ENCODE measurements at regions of chr6 and their contacts with region 1.

Region 1: GRCh38 chr6:53651764-53652401 is 13.7 kb downstream of the KLHL31 start:
- DNase-seq: peak; percentile 62 to 82 (median 74)
- ATAC-seq: peak; percentile 94
- H3K4me3 ChIP-seq: peak overlapping the region; percentile 91
- H3K4me3 Mint-ChIP-seq: peak overlapping the region; percentile 90 to 99 (median 94)
- H3K27ac ChIP-seq: peak overlapping the region; percentile 45
- H3K27ac Mint-ChIP-seq: peak overlapping the region; percentile 65 to 93 (median 84)
- H3K4me1 ChIP-seq: peaks cover 9 to 15% of the 10 kb centered on the region in 2 donors
- H3K4me1 Mint-ChIP-seq: peaks cover 14 to 34% (median 21%) of the 10 kb centered on the region in 7 donors
- H3K27me3 ChIP-seq: no peaks in the 10 kb centered on the region
- H3K27me3 Mint-ChIP-seq: peaks cover 0 to 35% (median 0%) of the 10 kb centered on the region in 5 donors

Region 2: GRCh38 chr6:52670502-52671409 is 981.1 kb before region 1 on chr6 and contains the start of gene TMEM14A:
- CTCF ChIA-PET with region 1: no interaction called
- POLR2A ChIA-PET with region 1: no interaction called
- intact Hi-C with region 1: loop called in 1 of 2 experiments (anchors 5 kb)
- DNase-seq: peak; percentile 81 to 94 (median 88)
- ATAC-seq: peak; percentile 96
- H3K4me3 ChIP-seq: peak within 1 kb of the TSS; percentile 74
- H3K4me3 Mint-ChIP-seq: peak within 1 kb of the TSS; percentile 86 to 97 (median 92)
- H3K27ac ChIP-seq: peak within 1 kb of the TSS; percentile 67
- H3K27ac Mint-ChIP-seq: peak within 1 kb of the TSS; percentile 52 to 94 (median 84)
- H3K4me1 ChIP-seq: peaks cover 12 to 15% of the 10 kb centered on the region in 2 donors
- H3K4me1 Mint-ChIP-seq: peaks cover 25 to 38% (median 35%) of the 10 kb centered on the region in 7 donors
- H3K27me3 ChIP-seq: no peaks in the 10 kb centered on the region
- H3K27me3 Mint-ChIP-seq: peaks cover 0 to 3% (median 0%) of the 10 kb centered on the region in 5 donors
- total RNA-seq, gene TMEM14A: 5.3 to 18.2 (median 8.0) TPM

Region 3: GRCh38 chr6:53171605-53172446 is 480.1 kb before region 1 on chr6:
- CTCF ChIA-PET with region 1: no interaction called
- POLR2A ChIA-PET with region 1: no interaction called
- intact Hi-C with region 1: loop called (anchors 2 to 5 kb)
- DNase-seq: peak; percentile 76 to 95 (median 87)
- ATAC-seq: peak; percentile 100
- H3K4me3 ChIP-seq: no peak overlapping the region
- H3K4me3 Mint-ChIP-seq: no peak overlapping the region
- H3K27ac ChIP-seq: no peak overlapping the region
- H3K27ac Mint-ChIP-seq: no peak overlapping the region
- H3K4me1 ChIP-seq: no peaks in the 10 kb centered on the region
- H3K4me1 Mint-ChIP-seq: peaks cover 0 to 6% (median 0%) of the 10 kb centered on the region in 7 donors
- H3K27me3 ChIP-seq: no peaks in the 10 kb centered on the region
- H3K27me3 Mint-ChIP-seq: peaks cover 0 to 3% (median 0%) of the 10 kb centered on the region in 5 donors

Region 4: GRCh38 chr6:53300656-53301551 is 351.0 kb before region 1 on chr6:
- CTCF ChIA-PET with region 1: no interaction called
- POLR2A ChIA-PET with region 1: no interaction called
- intact Hi-C with region 1: loop called in 1 of 2 experiments (anchors 5 kb)
- DNase-seq: no peak
- ATAC-seq: peak; percentile 48
- H3K4me3 ChIP-seq: no peak overlapping the region
- H3K4me3 Mint-ChIP-seq: peak overlapping the region; percentile 5 to 74 (median 50)
- H3K27ac ChIP-seq: no peak overlapping the region
- H3K27ac Mint-ChIP-seq: peak overlapping the region; percentile 33 to 92 (median 68)
- H3K4me1 ChIP-seq: peaks cover 35 to 52% of the 10 kb centered on the region in 2 donors
- H3K4me1 Mint-ChIP-seq: peaks cover 53 to 84% (median 78%) of the 10 kb centered on the region in 7 donors
- H3K27me3 ChIP-seq: no peaks in the 10 kb centered on the region
- H3K27me3 Mint-ChIP-seq: no peaks in the 10 kb centered on the region

Region 5: DNA sequence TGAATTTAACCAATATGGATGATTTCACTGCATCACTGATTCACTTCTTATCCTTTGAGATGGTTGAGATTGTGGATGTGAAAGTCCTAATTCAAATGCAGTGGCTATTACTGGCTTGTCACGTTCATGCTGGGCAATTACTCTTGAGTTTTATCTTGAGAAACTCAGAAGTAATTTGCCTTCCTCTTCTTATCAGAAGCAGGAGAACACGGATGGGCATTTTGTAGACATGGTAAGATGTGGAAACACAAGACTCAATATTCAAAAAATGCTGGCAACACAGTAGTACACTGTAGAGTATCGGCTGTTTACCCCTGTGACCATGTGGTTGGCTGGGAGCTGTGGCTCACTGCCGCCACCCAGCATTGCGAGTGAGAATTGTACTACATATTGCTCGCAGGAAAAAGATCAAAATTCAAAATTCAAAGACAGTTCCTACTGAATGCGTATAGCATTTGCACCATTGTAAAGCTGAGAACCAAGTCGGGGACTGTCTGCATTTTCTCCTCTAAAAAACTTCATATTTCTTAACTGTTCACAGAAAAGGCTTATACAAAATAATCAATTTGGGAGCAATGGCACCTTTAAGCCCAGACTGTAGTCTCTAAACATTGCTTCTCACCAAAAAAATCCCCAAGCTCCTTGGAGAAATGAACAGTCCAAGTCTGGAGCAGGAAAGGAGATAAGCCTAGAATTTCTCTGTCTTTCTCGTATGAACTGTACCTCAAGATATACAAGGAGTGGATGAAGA is 241.2 kb before region 1 on chr6:
- CTCF ChIA-PET with region 1: no interaction called
- POLR2A ChIA-PET with region 1: no interaction called
- intact Hi-C with region 1: loop called in 1 of 2 experiments (anchors 2 kb)
- DNase-seq: peak; percentile 21 to 72 (median 63)
- ATAC-seq: peak; percentile 98
- H3K4me3 ChIP-seq: no peak overlapping the region
- H3K4me3 Mint-ChIP-seq: no peak overlapping the region
- H3K27ac ChIP-seq: no peak overlapping the region
- H3K27ac Mint-ChIP-seq: peak overlapping the region in 1 of 9 donors; percentile 22
- H3K4me1 ChIP-seq: peaks cover 0 to 3% of the 10 kb centered on the region in 2 donors
- H3K4me1 Mint-ChIP-seq: peaks cover 0 to 6% (median 3%) of the 10 kb centered on the region in 7 donors
- H3K27me3 ChIP-seq: no peaks in the 10 kb centered on the region
- H3K27me3 Mint-ChIP-seq: peaks cover 0 to 5% (median 0%) of the 10 kb centered on the region in 5 donors

Region 6: DNA sequence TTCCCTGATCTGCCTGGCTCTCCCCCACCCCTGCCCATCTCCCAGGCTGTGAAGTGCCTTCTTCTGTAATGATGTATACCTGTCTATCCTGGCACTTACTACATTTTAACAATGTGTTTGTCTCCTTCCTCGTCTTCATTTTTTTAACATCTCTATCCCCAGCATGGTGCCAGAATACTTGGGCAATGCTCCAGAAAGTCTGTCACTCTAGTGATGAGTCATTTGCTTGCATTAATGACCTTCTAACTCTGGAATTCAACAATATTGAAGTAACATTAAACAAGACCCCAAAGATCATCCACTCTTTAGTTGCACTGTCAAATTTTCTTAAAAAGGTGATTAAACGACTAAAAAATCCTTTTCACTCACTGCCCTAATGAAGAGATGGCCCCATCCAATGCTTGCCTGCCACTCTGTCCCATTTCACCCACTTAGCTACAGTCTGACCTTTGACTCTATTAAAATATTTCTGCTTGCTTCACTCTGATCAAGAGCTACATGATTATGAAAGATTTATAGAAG is 21.3 kb after region 1 on chr6:
- CTCF ChIA-PET with region 1: no interaction called
- POLR2A ChIA-PET with region 1: no interaction called
- intact Hi-C with region 1: no loop called
- DNase-seq: no peak
- ATAC-seq: no peak
- H3K4me3 ChIP-seq: no peak overlapping the region
- H3K4me3 Mint-ChIP-seq: no peak overlapping the region
- H3K27ac ChIP-seq: no peak overlapping the region
- H3K27ac Mint-ChIP-seq: no peak overlapping the region
- H3K4me1 ChIP-seq: no peaks in the 10 kb centered on the region
- H3K4me1 Mint-ChIP-seq: no peaks in the 10 kb centered on the region
- H3K27me3 ChIP-seq: no peaks in the 10 kb centered on the region
- H3K27me3 Mint-ChIP-seq: peaks cover 11 to 22% (median 13%) of the 10 kb centered on the region in 5 donors

Region 7: DNA sequence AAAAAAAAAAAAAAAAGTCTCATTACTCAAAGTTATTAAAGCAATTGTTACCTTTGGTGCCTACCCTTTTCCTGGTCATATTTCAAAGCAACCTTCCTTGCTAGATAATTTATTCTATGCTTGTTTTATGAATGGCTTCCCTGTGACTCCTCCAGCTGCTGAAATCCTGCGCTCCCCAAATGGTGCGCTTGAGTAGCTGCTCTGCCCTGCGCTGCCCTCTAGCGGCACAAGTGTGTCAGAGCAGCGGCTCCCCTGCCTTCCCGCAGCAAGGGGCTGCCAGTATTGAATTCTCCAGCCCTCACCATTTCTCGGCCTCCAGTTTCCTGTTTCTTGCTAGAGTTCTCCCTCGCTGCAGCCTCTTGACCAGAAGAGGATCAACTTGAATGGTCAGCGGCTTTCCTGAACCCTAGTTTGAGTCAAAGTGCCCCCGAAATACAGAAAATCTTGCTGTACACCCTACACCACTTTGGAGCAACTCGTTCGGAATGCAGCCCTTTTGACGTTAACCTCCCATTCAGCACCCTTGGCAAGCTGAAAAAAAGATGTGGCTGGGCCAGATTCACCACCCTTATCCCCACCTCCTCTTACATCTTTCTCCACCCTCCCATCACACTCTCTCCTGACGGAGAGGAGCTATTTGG is 74.0 kb after region 1 on chr6:
- CTCF ChIA-PET with region 1: interaction called, 7 read pairs
- POLR2A ChIA-PET with region 1: no interaction called
- intact Hi-C with region 1: loop called (anchors 1 to 2 kb)
- DNase-seq: peak; percentile 46 to 79 (median 63)
- ATAC-seq: peak; percentile 95
- H3K4me3 ChIP-seq: no peak overlapping the region
- H3K4me3 Mint-ChIP-seq: peak overlapping the region in 1 of 10 donors; percentile 59
- H3K27ac ChIP-seq: no peak overlapping the region
- H3K27ac Mint-ChIP-seq: peak overlapping the region in 1 of 9 donors; percentile 63
- H3K4me1 ChIP-seq: no peaks in the 10 kb centered on the region
- H3K4me1 Mint-ChIP-seq: peaks cover 0 to 14% (median 4%) of the 10 kb centered on the region in 7 donors
- H3K27me3 ChIP-seq: no peaks in the 10 kb centered on the region
- H3K27me3 Mint-ChIP-seq: peaks cover 15 to 24% (median 22%) of the 10 kb centered on the region in 5 donors

Region 8: DNA sequence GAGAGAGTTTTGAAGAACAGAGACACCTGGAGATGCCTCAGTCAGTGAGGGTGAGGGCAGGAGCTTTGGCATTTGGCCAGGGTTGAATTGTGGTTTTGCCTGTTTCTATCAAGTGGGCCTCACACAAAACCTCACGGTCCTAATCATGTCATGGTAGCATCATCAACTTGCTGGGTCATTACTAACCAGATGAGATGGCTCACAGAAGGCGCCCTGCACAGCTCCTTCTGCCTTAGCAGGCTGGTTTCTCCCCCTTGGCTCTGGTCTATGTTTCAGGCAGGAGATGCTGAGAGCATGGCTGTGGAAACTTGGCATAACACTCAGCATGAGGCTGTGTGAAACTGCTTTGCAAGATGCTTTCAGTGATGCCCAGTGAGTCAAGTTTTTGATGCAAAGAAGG is 242.2 kb after region 1 on chr6:
- CTCF ChIA-PET with region 1: no interaction called
- POLR2A ChIA-PET with region 1: no interaction called
- intact Hi-C with region 1: no loop called
- DNase-seq: no peak
- ATAC-seq: no peak
- H3K4me3 ChIP-seq: no peak overlapping the region
- H3K4me3 Mint-ChIP-seq: no peak overlapping the region
- H3K27ac ChIP-seq: no peak overlapping the region
- H3K27ac Mint-ChIP-seq: peak overlapping the region in 1 of 9 donors; percentile 38
- H3K4me1 ChIP-seq: no peaks in the 10 kb centered on the region
- H3K4me1 Mint-ChIP-seq: peaks cover 0 to 5% (median 0%) of the 10 kb centered on the region in 7 donors
- H3K27me3 ChIP-seq: no peaks in the 10 kb centered on the region
- H3K27me3 Mint-ChIP-seq: no peaks in the 10 kb centered on the region